ENCODE measurements at regions of chr1 and their contacts with region 1.

Region 1: DNA sequence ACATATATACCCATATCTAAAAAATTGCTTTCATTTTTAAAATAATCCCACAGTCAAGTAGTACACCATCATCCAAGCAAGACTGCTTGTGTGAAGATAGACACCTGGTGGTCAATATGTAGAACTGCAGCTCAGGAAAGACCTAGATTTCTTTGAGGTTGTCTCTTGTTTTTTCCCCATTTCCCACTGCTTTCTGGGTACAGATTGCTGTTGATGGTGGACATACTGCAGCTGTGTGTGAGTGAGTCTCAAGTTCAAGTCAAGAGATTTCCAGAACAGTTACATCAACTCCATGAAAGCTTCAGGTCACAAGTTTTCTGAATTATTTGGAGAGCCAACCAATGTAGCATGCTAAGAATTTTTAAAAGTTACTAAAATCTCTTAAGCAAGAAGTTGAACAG is 306.4 kb downstream of the DUSP10 start:
- DNase-seq: no peak
- ATAC-seq: peak; percentile 71 to 89 (median 88)
- H3K4me3 ChIP-seq: no peak overlapping the region
- H3K27ac ChIP-seq: no peak overlapping the region
- H3K4me1 ChIP-seq: no peaks in the 10 kb centered on the region
- H3K27me3 ChIP-seq: no peaks in the 10 kb centered on the region
- CTCF ChIP-seq: peak; percentile 90 to 95 (median 94)
- POLR2A ChIP-seq: no peak

Region 2: GRCh38 chr1:221263831-221264767 is 171.4 kb before region 1 on chr1:
- intact Hi-C with region 1: loop called in 1 of 2 experiments (anchors 10 kb)
- DNase-seq: peak in 2 of 3 donors; percentile 25 to 71
- ATAC-seq: peak; percentile 95 to 97 (median 96)
- H3K4me3 ChIP-seq: no peak overlapping the region
- H3K27ac ChIP-seq: peak overlapping the region in 1 of 3 donors; percentile 22
- H3K4me1 ChIP-seq: no peaks in the 10 kb centered on the region
- H3K27me3 ChIP-seq: no peaks in the 10 kb centered on the region
- CTCF ChIP-seq: peak; percentile 61 to 84 (median 72)
- POLR2A ChIP-seq: no peak

Region 3: GRCh38 chr1:221494670-221495069 is 59.2 kb after region 1 on chr1:
- intact Hi-C with region 1: no loop called
- DNase-seq: no peak
- ATAC-seq: peak in 1 of 4 donors; percentile 21
- H3K4me3 ChIP-seq: no peak overlapping the region
- H3K27ac ChIP-seq: no peak overlapping the region
- H3K4me1 ChIP-seq: no peaks in the 10 kb centered on the region
- H3K27me3 ChIP-seq: no peaks in the 10 kb centered on the region
- CTCF ChIP-seq: no peak
- POLR2A ChIP-seq: no peak